OCI-LY7 (cell line): ENCODE measurements at regions of chr12 and their contacts with region 1.

Region 1: GRCh38 chr12:50084775-50085614 is at the start of gene SMARCD1:
- DNase-seq: peak; percentile 96
- H3K4me3 ChIP-seq: peak within 1 kb of the TSS; percentile 89
- H3K27ac ChIP-seq: peak within 1 kb of the TSS; percentile 83
- H3K4me1 ChIP-seq: peaks cover 38% of the 10 kb centered on the region
- CTCF ChIP-seq: peak; percentile 85
- total RNA-seq, gene SMARCD1: 117 and 134 TPM in 2 replicates

Region 2: GRCh38 chr12:50167041-50167828 is 82.2 kb after region 1 on chr12 and contains the start of gene CERS5:
- CTCF ChIA-PET with region 1: interaction called, 4 read pairs
- POLR2A ChIA-PET with region 1: interaction called, 18 read pairs
- intact Hi-C with region 1: loop called (anchors 1 kb)
- DNase-seq: peak; percentile 96
- H3K4me3 ChIP-seq: peak within 1 kb of the TSS; percentile 93
- H3K27ac ChIP-seq: peak within 1 kb of the TSS; percentile 71
- H3K4me1 ChIP-seq: peaks cover 11% of the 10 kb centered on the region
- CTCF ChIP-seq: no peak
- total RNA-seq, gene CERS5: 27.6 and 28.6 TPM in 2 replicates

Region 3: DNA sequence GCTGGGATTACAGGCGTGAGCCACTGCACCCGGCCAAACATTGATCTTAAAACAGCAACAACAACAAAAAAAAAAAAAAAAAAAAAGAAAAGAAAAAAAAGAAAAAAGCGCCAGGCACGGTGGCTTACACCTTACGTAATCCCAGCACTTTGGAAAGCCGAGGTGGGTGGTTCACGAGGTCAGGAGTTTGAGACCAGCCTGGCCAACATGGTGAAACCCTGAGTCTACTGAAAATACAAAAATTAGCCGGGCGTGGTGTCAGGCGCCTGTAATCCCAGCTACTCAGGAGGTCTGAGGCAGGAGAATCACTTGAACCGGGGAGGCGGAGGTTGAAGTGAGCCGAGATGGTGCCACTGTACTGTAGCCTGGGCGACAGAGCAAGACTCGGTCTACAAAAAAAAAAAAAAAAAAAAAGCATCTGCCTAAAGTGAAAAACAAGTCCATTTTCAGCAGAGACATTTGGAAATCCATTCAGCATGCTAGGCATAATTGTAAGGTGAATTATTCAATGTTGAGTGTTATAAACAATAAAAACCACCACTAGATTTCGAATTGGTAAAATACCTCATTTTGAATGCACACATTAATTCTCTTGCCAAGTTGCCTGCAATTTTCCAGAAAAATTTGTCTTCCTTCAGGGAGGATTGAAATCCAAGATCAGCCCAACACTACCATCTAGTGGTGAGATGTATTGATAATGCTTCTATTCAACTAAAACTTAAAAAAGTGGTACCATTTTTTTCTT is 90.1 kb after region 1 on chr12:
- CTCF ChIA-PET with region 1: no interaction called
- POLR2A ChIA-PET with region 1: no interaction called
- intact Hi-C with region 1: loop called (anchors 2 kb)
- DNase-seq: peak; percentile 69
- H3K4me3 ChIP-seq: no peak overlapping the region
- H3K27ac ChIP-seq: no peak overlapping the region
- H3K4me1 ChIP-seq: no peaks in the 10 kb centered on the region
- CTCF ChIP-seq: peak; percentile 97

Region 4: DNA sequence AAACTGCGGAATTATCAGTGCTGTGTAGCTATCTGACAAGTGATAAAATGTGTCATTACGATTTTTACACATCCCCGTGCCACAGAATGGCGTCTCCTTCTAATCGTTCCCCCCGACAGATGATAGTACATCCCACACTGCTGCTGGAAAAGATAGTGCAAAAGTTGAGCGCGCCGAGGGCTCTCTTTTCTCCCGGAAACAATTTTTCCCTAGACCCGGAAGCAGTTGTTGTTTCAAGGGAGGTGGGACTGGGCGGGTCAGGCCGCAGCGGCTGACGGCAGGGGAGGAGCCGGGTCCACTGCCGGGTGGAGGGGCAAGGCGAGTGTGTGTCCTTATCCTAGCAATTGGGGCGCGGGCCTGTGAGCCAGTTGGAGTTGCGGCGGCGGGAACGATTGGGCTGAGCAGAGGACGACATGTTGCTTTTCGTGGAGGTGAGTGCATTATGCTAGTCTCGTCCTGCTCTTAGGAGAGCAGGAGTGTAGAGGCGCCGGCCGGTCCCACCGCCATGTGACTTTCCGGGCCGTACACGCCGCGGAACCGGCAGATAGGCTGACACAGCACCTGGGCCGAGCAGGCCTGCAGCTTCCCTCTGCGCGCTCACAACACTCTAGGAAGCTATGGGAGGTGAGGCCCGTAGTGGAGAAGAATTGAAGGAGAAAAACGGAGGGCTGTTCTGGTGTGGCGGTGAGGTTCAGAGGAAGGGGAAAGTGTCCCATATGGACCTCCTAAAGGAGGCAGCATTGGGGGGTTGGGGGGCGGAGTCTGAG is 315.8 kb after region 1 on chr12 and contains the start of gene LARP4:
- CTCF ChIA-PET with region 1: no interaction called
- POLR2A ChIA-PET with region 1: no interaction called
- intact Hi-C with region 1: loop called (anchors 1 kb)
- DNase-seq: peak; percentile 96
- H3K4me3 ChIP-seq: peak within 1 kb of the TSS; percentile 85
- H3K27ac ChIP-seq: peak within 1 kb of the TSS; percentile 81
- H3K4me1 ChIP-seq: peaks cover 12% of the 10 kb centered on the region
- CTCF ChIP-seq: no peak
- total RNA-seq, gene LARP4: 32.9 and 35.0 TPM in 2 replicates

Region 5: DNA sequence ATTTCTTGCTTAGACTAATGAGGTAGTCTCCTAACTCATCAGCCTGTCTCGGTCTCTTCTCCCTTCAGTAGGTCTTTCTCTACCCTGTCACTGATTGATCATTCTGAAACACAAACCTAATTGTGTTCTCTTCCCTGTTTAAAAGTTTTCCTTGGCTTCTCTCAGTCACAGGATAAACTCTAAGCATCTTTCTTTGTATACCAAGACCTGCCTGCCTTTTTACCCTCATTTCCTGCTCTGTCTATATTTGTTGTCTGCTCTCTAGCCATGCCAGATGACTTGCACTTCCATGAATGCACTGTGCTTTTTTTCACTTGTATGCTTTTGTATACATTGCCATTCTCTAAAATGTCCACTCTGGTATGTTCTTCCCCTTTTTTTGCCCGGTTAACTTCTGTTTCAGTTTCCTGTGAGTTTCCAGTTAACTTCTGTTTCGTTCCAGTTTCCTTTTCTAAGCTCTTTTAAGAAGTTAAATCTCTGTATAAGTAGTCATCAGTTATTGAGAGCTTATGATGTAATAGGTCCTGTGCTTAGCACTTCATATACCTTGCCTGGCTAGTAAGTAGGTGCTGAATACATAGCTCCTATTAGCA is 432.6 kb after region 1 on chr12:
- CTCF ChIA-PET with region 1: no interaction called
- POLR2A ChIA-PET with region 1: no interaction called
- intact Hi-C with region 1: no loop called
- DNase-seq: peak; percentile 65
- H3K4me3 ChIP-seq: no peak overlapping the region
- H3K27ac ChIP-seq: peak overlapping the region; percentile 58
- H3K4me1 ChIP-seq: peaks cover 49% of the 10 kb centered on the region
- CTCF ChIP-seq: no peak